ENCODE measurements at regions of chr20 and their contacts with region 1.

Region 1: GRCh38 chr20:41011551-41012067 is 17.0 kb upstream of the TOP1 start:
- DNase-seq: peak; percentile 40
- ATAC-seq: peak; percentile 94
- H3K4me3 Mint-ChIP-seq: peak overlapping the region; percentile 70
- H3K27ac Mint-ChIP-seq: peak overlapping the region; percentile 84
- H3K4me1 Mint-ChIP-seq: peaks cover 49% of the 10 kb centered on the region
- H3K27me3 Mint-ChIP-seq: no peaks in the 10 kb centered on the region
- CTCF ChIP-seq: no peak

Region 2: DNA sequence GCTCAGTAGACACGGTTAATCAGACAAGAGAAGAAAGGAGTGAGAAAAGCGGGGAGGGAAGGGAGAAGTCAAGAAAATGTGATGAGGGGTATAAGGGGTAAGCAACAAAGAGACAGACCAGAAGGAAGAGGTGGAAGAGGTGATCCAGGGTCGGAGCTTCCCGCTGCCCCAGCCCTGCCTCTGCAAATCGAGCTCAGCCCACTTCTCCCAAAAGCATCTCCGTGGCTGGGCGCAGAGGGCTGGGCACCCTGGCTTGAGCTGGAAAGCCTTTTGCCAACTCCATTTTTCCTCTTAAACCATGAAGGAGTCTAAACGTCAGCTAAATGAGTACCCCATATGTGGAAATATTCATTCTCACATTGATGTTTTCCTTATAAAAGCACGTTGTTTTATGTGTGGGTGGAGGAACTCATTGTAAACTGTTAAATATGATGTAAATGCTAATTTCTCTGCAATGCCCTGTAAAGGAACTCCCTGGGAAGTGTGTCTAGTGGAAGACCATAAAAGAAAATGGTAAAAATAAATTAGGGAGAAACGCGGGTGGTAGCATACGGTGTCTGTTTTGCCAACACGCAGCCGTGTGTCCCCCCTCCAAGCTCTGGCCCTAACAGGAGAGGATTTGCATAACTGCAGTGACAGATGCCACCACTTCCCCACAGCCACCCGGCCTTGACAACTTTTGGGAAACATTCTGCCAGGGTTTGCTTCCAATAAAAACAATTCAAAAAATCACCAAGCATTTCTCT is 267.4 kb before region 1 on chr20:
- CTCF ChIA-PET with region 1: no interaction called
- POLR2A ChIA-PET with region 1: no interaction called
- intact Hi-C with region 1: no loop called
- DNase-seq: no peak
- ATAC-seq: no peak
- H3K4me3 Mint-ChIP-seq: no peak overlapping the region
- H3K27ac Mint-ChIP-seq: no peak overlapping the region
- H3K4me1 Mint-ChIP-seq: peaks cover 16% of the 10 kb centered on the region
- H3K27me3 Mint-ChIP-seq: peaks cover 10% of the 10 kb centered on the region
- CTCF ChIP-seq: no peak

Region 3: GRCh38 chr20:41023544-41023943 is 11.9 kb after region 1 on chr20:
- CTCF ChIA-PET with region 1: interaction called, 4 read pairs
- POLR2A ChIA-PET with region 1: interaction called, 49 read pairs
- intact Hi-C with region 1: loop called (anchors 1 kb)
- DNase-seq: no peak
- ATAC-seq: no peak
- H3K4me3 Mint-ChIP-seq: no peak overlapping the region
- H3K27ac Mint-ChIP-seq: no peak overlapping the region
- H3K4me1 Mint-ChIP-seq: peaks cover 15% of the 10 kb centered on the region
- H3K27me3 Mint-ChIP-seq: no peaks in the 10 kb centered on the region
- CTCF ChIP-seq: no peak

Region 4: GRCh38 chr20:41047975-41048305 is 36.3 kb after region 1 on chr20:
- CTCF ChIA-PET with region 1: interaction called, 4 read pairs
- POLR2A ChIA-PET with region 1: interaction called, 3 read pairs
- intact Hi-C with region 1: loop called (anchors 2 kb)
- DNase-seq: no peak
- ATAC-seq: peak; percentile 76
- H3K4me3 Mint-ChIP-seq: peak overlapping the region; percentile 73
- H3K27ac Mint-ChIP-seq: peak overlapping the region; percentile 80
- H3K4me1 Mint-ChIP-seq: peaks cover 85% of the 10 kb centered on the region
- H3K27me3 Mint-ChIP-seq: no peaks in the 10 kb centered on the region
- CTCF ChIP-seq: no peak